PC-9 (cell line): ENCODE measurements at regions of chr17 and their contacts with region 1.

Region 1: GRCh38 chr17:61551255-61551742 is 39.7 kb downstream of the NACA2 start:
- DNase-seq: no peak
- H3K4me3 ChIP-seq: no peak overlapping the region
- H3K27ac ChIP-seq: no peak overlapping the region
- H3K4me1 ChIP-seq: peaks cover 17% of the 10 kb centered on the region
- H3K27me3 ChIP-seq: no peaks in the 10 kb centered on the region
- CTCF ChIP-seq: peak; percentile 81

Region 2: DNA sequence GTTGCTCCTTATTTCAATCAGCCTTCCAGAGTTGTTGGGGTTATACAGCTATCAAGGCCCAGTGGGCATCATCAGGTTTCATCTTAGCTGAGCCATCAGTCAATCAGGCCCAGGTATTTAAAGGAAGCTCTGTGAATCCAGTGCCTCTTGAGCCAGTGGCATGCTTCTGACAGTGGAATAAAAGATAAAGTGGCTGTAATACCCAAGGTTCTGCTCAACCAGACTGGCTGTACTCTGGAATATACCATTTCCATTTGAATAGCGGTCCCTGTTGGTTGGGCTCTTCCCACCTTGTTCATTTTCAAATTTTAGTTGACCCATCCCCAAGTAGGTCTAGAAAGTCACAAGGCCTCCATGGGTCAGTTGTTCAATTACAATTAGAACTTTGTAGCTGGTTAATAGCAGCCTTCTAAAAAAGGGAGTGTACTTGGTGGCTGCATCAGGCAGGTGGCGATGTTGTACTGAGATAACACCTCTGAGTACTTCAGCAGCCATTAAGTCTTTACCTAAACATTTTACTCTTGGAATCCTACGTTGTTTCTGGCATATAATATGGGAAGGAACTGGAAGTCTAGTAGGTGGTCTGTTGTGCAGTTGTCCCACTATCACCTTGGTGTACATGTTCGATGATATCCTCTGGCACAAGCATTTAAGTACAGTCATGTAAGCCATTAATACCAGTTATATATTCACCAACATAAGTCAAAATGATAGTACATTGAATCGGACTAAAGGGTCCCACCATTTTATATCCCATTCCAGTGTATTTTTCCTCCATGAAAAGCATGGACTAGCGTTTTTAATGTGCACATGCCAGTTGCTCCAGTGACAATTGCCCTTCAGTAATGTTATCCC is 579.6 kb before region 1 on chr17:
- CTCF ChIA-PET with region 1: no interaction called
- POLR2A ChIA-PET with region 1: no interaction called
- intact Hi-C with region 1: loop called (anchors 5 kb)
- DNase-seq: peak; percentile 40
- H3K4me3 ChIP-seq: no peak overlapping the region
- H3K27ac ChIP-seq: no peak overlapping the region
- H3K4me1 ChIP-seq: no peaks in the 10 kb centered on the region
- H3K27me3 ChIP-seq: no peaks in the 10 kb centered on the region
- CTCF ChIP-seq: peak; percentile 81

Region 3: GRCh38 chr17:61389670-61390478 is 161.4 kb before region 1 on chr17:
- CTCF ChIA-PET with region 1: no interaction called
- POLR2A ChIA-PET with region 1: no interaction called
- intact Hi-C with region 1: no loop called
- DNase-seq: peak in 1 of 2 experiments; percentile 51
- H3K4me3 ChIP-seq: no peak overlapping the region
- H3K27ac ChIP-seq: no peak overlapping the region
- H3K4me1 ChIP-seq: 0 out of 2 replicates have a peak, but pooled peaks cover 6% of the 10 kb centered on the region
- H3K27me3 ChIP-seq: no peaks in the 10 kb centered on the region
- CTCF ChIP-seq: peak; percentile 88

Region 4: DNA sequence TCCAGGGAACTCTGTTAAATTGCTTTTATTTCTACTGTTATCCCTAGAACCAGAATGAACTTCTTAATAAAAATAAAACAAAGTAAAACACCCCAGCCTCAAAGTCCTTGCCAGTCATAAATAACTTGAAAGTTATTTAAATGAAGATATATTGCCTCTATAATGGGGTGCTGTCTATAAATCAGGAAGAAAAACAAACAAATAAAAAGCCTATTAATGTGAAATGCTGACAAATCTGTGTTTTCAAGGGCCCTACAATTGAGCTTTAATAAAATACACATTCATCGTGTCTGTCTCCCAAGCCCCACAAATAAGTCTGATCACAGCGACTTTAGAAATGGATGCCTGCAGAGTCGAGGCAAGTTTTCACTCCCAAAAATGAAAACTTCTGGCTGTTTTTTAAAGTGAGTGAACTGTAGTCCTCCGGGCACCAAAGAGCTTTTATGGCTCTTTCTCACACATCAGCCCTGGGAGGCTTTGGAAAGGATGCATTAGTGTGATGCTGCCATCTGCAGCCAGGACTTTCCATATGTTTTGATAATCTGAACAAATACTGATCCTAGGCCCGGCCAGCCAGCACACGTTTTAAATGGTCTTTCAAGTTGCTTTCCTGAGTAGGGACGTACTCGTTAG is 23.4 kb after region 1 on chr17:
- CTCF ChIA-PET with region 1: no interaction called
- POLR2A ChIA-PET with region 1: no interaction called
- intact Hi-C with region 1: loop called (anchors 1 kb)
- DNase-seq: peak; percentile 43 to 50
- H3K4me3 ChIP-seq: no peak overlapping the region
- H3K27ac ChIP-seq: no peak overlapping the region
- H3K4me1 ChIP-seq: peaks cover 16% of the 10 kb centered on the region
- H3K27me3 ChIP-seq: no peaks in the 10 kb centered on the region
- CTCF ChIP-seq: peak; percentile 65

Region 5: DNA sequence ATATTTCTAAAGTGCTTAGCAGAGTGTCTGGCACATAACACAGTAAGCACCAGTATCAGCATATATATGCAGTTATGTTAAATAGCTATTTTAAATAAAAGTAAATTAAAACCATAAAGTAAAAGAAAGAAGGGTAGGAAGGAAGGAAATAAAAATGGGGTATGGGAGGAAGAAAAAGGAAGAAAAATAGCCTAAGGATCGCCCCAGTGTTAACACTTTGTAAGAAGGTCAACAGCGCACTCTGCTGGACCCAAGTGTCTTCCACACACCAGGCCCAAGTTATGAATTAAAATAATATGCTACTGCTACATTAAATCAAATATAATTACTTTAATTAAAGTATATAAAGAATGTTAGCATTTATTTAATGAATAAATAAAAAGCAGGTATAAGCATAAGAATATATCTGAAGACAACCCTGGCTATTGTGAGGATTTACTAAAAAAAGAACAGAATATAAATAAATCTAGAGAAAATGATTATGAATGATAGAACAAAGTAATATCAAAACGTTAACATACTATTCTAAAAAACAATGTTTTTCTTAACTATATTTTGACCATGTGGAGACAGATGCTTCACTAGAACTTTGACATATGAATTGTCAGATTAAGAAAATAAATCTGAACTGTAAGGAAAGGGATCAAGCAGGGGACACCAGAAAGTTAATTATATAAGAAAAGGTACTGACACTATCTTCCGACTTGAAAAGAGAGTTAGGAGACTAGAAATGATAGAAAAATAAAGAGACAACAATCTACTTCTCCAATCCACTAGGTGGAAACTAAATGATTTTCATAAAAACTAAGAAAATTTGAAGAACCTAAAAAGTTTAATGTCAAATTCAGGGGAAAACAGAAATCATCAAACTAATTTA is 286.1 kb after region 1 on chr17:
- CTCF ChIA-PET with region 1: no interaction called
- POLR2A ChIA-PET with region 1: no interaction called
- intact Hi-C with region 1: loop called (anchors 10 kb)
- DNase-seq: peak in 1 of 2 experiments; percentile 48
- H3K4me3 ChIP-seq: no peak overlapping the region
- H3K27ac ChIP-seq: no peak overlapping the region
- H3K4me1 ChIP-seq: peaks cover 25% of the 10 kb centered on the region
- H3K27me3 ChIP-seq: no peaks in the 10 kb centered on the region
- CTCF ChIP-seq: peak; percentile 87